ENCODE measurements at regions of chr11 and their contacts with region 1.

Region 1: DNA sequence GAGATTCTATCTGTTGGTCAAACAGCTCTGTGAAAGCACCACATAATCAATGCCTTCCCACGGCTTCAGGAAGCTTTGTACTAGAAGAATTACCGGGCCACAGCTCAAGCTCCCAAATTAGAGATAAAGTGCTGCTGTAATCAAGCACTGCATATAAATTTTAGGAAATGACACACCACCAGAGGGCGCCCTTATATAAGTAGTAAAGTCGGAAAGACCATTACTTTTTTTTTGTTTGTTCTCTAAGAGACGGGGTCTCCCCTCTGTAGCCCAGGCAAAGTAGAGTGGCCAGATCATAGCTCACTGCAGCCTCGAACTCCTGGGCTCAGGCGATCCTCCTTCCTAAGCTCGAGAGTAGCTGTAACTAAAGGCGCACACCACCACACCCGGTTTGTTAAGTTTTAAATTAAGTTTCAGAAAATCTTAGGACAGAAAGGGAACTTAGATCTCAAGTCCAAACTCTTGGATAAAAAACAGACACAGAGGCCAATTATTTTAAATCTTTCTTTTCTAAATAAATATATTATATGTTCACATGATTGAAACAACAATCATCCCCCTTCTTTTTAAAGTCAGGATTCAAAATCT is 32.6 kb downstream of the PRCP start:
- DNase-seq: peak; percentile 87
- ATAC-seq: peak; percentile 54
- H3K4me3 ChIP-seq: peak overlapping the region in 2 of 5 experiments; percentile 22 to 33
- H3K4me3 Mint-ChIP-seq: peak overlapping the region; percentile 63
- H3K27ac ChIP-seq: no peak overlapping the region
- H3K27ac Mint-ChIP-seq: peak overlapping the region; percentile 28
- H3K4me1 ChIP-seq: peaks cover 6% of the 10 kb centered on the region in 2 donors
- H3K4me1 Mint-ChIP-seq: peaks cover 9% of the 10 kb centered on the region
- H3K27me3 ChIP-seq: no peaks in the 10 kb centered on the region
- H3K27me3 Mint-ChIP-seq: no peaks in the 10 kb centered on the region
- CTCF ChIP-seq: peak; percentile 92

Region 2: GRCh38 chr11:82718307-82718706 is 149.3 kb before region 1 on chr11:
- CTCF ChIA-PET with region 1: interaction called, 5 read pairs
- POLR2A ChIA-PET with region 1: no interaction called
- intact Hi-C with region 1: loop called (anchors 5 kb)
- DNase-seq: peak; percentile 39
- ATAC-seq: no peak
- H3K4me3 ChIP-seq: no peak overlapping the region
- H3K4me3 Mint-ChIP-seq: no peak overlapping the region
- H3K27ac ChIP-seq: no peak overlapping the region
- H3K27ac Mint-ChIP-seq: no peak overlapping the region
- H3K4me1 ChIP-seq: no peaks in the 10 kb centered on the region
- H3K4me1 Mint-ChIP-seq: peaks cover 2% of the 10 kb centered on the region
- H3K27me3 ChIP-seq: peaks cover 0 to under 1% (median 0%) of the 10 kb centered on the region in 4 experiments
- H3K27me3 Mint-ChIP-seq: no peaks in the 10 kb centered on the region
- CTCF ChIP-seq: peak; percentile 76

Region 3: DNA sequence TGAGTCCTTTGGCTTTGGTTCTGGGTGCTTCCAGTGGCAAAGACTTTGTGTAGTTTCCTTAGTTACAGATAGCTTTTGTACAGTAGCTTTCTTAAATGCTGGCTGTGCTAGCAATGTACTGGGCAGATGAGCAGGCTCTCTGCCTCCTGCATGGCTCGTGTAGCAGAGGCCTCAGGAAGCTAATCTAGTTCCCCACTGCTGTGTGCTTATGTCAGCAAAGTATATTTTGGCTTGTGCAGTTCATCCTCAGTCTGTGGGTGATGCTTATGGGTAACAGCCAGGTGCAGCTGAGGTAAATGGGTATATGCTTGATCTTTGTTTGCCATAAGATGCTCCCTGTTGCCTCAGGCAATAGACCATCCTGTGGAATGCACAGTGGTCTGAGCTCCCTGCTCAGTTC is 64.9 kb before region 1 on chr11:
- CTCF ChIA-PET with region 1: no interaction called
- POLR2A ChIA-PET with region 1: no interaction called
- intact Hi-C with region 1: no loop called
- DNase-seq: no peak
- ATAC-seq: no peak
- H3K4me3 ChIP-seq: no peak overlapping the region
- H3K4me3 Mint-ChIP-seq: no peak overlapping the region
- H3K27ac ChIP-seq: no peak overlapping the region
- H3K27ac Mint-ChIP-seq: no peak overlapping the region
- H3K4me1 ChIP-seq: no peaks in the 10 kb centered on the region
- H3K4me1 Mint-ChIP-seq: no peaks in the 10 kb centered on the region
- H3K27me3 ChIP-seq: peaks cover 0 to 12% (median 4%) of the 10 kb centered on the region in 4 experiments
- H3K27me3 Mint-ChIP-seq: peaks cover 54% of the 10 kb centered on the region
- CTCF ChIP-seq: no peak

Region 4: GRCh38 chr11:82889133-82890001 is 21.8 kb after region 1 on chr11:
- CTCF ChIA-PET with region 1: interaction called, 33 read pairs
- POLR2A ChIA-PET with region 1: no interaction called
- intact Hi-C with region 1: no loop called
- DNase-seq: peak; percentile 58
- ATAC-seq: peak; percentile 71
- H3K4me3 ChIP-seq: peak overlapping the region in 2 of 5 experiments; percentile 9 to 71
- H3K4me3 Mint-ChIP-seq: peak overlapping the region; percentile 3
- H3K27ac ChIP-seq: peak overlapping the region in 1 of 2 donors; percentile 70
- H3K27ac Mint-ChIP-seq: no peak overlapping the region
- H3K4me1 ChIP-seq: peaks cover 41 to 46% of the 10 kb centered on the region in 2 donors
- H3K4me1 Mint-ChIP-seq: peaks cover 22% of the 10 kb centered on the region
- H3K27me3 ChIP-seq: no peaks in the 10 kb centered on the region
- H3K27me3 Mint-ChIP-seq: no peaks in the 10 kb centered on the region
- CTCF ChIP-seq: no peak

Region 5: GRCh38 chr11:82927254-82927880 is 59.8 kb after region 1 on chr11:
- CTCF ChIA-PET with region 1: interaction called, 17 read pairs
- POLR2A ChIA-PET with region 1: interaction called, 3 read pairs
- intact Hi-C with region 1: loop called (anchors 1 kb)
- DNase-seq: peak; percentile 76
- ATAC-seq: peak; percentile 81
- H3K4me3 ChIP-seq: no peak overlapping the region
- H3K4me3 Mint-ChIP-seq: peak overlapping the region; percentile 15
- H3K27ac ChIP-seq: no peak overlapping the region
- H3K27ac Mint-ChIP-seq: no peak overlapping the region
- H3K4me1 ChIP-seq: peaks cover 58 to 77% of the 10 kb centered on the region in 2 donors
- H3K4me1 Mint-ChIP-seq: peaks cover 67% of the 10 kb centered on the region
- H3K27me3 ChIP-seq: no peaks in the 10 kb centered on the region
- H3K27me3 Mint-ChIP-seq: no peaks in the 10 kb centered on the region
- CTCF ChIP-seq: peak; percentile 89

Region 6: DNA sequence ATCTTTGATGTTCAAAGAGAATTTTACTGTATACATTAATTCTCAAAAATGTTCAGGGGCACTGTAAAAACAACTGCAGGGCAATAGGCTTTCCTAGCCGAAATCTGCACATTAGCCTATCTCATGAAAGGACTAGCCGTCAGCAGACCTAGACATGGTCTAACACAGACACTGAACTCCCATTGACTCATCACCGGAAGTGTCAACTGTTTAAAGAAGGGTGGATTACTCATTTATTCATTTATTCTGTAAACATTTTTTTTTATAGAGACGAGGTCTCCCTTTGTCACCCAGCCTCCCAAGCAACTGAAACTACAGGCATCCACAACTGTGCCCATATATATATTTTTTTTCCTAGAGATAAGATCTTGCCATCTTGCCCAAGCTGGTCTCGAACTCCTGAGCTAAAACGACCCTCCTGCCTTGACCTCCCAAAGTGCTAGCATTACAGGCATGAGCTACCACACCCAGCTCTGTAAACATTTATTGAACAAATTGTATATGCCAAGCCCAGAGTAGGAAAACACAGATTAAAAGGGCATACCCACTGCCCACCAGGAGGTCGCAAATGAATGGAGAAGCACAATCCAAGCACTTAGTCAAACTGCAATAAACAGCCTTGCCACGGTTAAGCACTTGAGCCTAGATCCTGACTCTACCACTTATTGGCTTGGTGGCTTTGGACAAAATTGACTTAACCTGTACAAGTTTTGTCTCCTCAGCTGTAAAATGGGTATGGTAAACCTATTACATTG is 177.5 kb after region 1 on chr11:
- CTCF ChIA-PET with region 1: interaction called, 12 read pairs
- POLR2A ChIA-PET with region 1: no interaction called
- intact Hi-C with region 1: no loop called
- DNase-seq: no peak
- ATAC-seq: peak; percentile 54
- H3K4me3 ChIP-seq: no peak overlapping the region
- H3K4me3 Mint-ChIP-seq: peak overlapping the region; percentile 59
- H3K27ac ChIP-seq: peak overlapping the region in 1 of 2 donors; percentile 49
- H3K27ac Mint-ChIP-seq: peak overlapping the region; percentile 63
- H3K4me1 ChIP-seq: peaks cover 69 to 76% of the 10 kb centered on the region in 2 donors
- H3K4me1 Mint-ChIP-seq: peaks cover 81% of the 10 kb centered on the region
- H3K27me3 ChIP-seq: no peaks in the 10 kb centered on the region
- H3K27me3 Mint-ChIP-seq: no peaks in the 10 kb centered on the region
- CTCF ChIP-seq: no peak

Region 7: DNA sequence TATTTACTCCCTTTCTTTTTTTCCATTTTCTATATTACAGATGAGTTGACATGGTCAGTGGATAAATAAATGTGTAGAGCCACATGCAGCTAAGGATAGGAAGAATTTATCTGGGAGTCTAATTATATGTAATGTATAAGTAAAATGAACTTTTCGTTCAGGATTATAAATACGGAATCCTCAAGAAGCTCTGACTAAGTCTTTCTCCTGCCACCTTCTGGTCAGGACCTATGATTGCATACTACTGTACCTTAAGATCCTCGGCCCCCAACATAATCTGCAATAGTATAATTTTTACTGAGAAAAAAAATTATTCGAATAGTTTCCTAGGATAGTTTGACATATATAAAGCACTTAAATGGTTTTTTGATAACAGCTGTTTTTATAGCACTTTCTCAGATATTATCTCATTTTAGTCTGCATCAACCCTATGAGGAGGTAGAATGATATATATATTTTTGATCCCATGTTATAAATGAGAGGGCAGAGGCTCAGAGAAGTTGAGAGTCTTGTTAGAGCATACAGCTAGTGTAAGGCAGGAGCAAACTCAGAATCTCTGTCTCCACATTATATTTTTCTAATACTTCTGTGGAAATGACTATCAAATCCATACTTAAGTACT is 382.5 kb after region 1 on chr11:
- CTCF ChIA-PET with region 1: interaction called, 151 read pairs
- POLR2A ChIA-PET with region 1: no interaction called
- intact Hi-C with region 1: loop called (anchors 1 kb)
- DNase-seq: peak; percentile 62
- ATAC-seq: peak; percentile 63
- H3K4me3 ChIP-seq: no peak overlapping the region
- H3K4me3 Mint-ChIP-seq: no peak overlapping the region
- H3K27ac ChIP-seq: no peak overlapping the region
- H3K27ac Mint-ChIP-seq: no peak overlapping the region
- H3K4me1 ChIP-seq: peaks cover 4 to 6% of the 10 kb centered on the region in 2 donors
- H3K4me1 Mint-ChIP-seq: peaks cover 14% of the 10 kb centered on the region
- H3K27me3 ChIP-seq: no peaks in the 10 kb centered on the region
- H3K27me3 Mint-ChIP-seq: no peaks in the 10 kb centered on the region
- CTCF ChIP-seq: peak; percentile 83

Region 8: DNA sequence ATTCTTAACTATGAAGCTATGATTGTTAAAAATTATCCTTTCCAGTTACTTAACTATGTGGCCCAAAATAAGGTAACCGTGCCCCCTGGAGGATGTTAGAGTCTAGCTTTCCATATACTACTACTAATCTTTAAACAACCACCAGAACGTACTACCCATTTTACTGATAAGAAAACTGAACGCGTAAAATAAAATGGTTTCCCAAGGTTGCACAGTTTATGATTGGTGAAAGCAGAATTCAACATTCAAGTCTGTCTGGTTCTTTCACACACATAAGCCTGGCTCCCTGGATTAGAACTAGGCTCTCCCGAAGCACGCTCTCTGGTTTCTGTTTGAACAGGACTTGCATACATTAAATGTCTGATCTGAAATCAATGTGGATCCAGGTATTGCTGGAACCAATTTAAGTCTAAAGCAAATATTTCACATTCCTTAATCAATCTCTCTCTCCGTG is 856.4 kb after region 1 on chr11:
- CTCF ChIA-PET with region 1: interaction called, 8 read pairs
- POLR2A ChIA-PET with region 1: no interaction called
- intact Hi-C with region 1: loop called (anchors 2 kb)
- DNase-seq: peak; percentile 68
- ATAC-seq: peak; percentile 36
- H3K4me3 ChIP-seq: peak overlapping the region in 3 of 5 experiments; percentile 33 to 51 (median 34)
- H3K4me3 Mint-ChIP-seq: peak overlapping the region; percentile 80
- H3K27ac ChIP-seq: no peak overlapping the region
- H3K27ac Mint-ChIP-seq: peak overlapping the region; percentile 51
- H3K4me1 ChIP-seq: peaks cover 20 to 22% of the 10 kb centered on the region in 2 donors
- H3K4me1 Mint-ChIP-seq: peaks cover 25% of the 10 kb centered on the region
- H3K27me3 ChIP-seq: peaks cover 0 to 8% (median 3%) of the 10 kb centered on the region in 4 experiments
- H3K27me3 Mint-ChIP-seq: peaks cover 22% of the 10 kb centered on the region
- CTCF ChIP-seq: peak; percentile 42